ENCODE measurements at regions of chr10 and their contacts with region 1.

Region 1: DNA sequence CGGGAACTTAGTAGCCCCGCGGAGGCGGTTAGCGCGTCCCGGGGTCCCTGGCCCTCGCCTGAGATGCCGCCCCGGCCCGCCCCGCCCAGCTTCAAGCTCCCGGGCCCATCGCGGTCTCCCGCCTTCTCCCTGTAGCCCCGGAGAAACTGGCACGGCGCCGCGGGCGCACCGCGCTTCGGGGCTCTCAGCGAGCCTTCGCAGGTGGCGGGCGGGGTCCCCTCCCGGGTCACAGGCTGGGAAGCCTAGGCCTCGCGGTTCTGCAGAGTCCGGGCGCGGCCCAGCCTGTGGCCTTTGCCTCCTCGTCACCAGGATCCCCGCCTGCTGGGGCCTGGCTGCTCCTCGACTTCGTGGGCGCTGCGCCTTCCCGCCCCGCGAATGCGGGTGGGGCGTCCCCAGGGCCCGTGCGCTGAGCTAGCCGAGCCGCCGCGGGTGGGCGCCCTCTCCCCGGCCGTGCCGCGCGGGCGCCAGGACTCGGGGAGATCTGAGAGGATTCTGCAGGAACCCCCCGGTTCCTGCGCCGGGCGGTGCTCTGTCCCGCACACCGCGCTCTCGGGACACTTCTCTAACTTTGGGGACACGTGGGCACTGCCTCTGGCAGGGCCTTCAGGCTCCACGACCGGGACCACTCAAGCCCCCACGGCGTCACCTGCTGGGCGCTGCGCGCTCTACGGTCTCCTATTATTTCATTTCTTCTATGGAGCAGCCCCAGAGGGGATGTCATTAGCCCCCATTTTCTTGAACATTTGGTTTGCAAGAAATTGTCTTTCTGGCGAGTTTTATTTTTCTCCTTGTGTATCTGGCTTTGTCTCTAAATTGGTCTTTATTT is 682 bp upstream of the RGS10 start:
- DNase-seq: peak; percentile 54 to 74 (median 68)
- ATAC-seq: peak; percentile 68
- H3K4me3 ChIP-seq: peak overlapping the region; percentile 96
- H3K4me3 Mint-ChIP-seq: peak overlapping the region; percentile 83 to 97 (median 94)
- H3K27ac ChIP-seq: peak overlapping the region; percentile 89
- H3K27ac Mint-ChIP-seq: peak overlapping the region; percentile 86 to 95 (median 91)
- H3K4me1 ChIP-seq: peaks cover 15 to 19% of the 10 kb centered on the region in 2 donors
- H3K4me1 Mint-ChIP-seq: peaks cover 19 to 41% (median 28%) of the 10 kb centered on the region in 7 donors
- H3K27me3 ChIP-seq: no peaks in the 10 kb centered on the region
- H3K27me3 Mint-ChIP-seq: peaks cover 0 to 17% (median 3%) of the 10 kb centered on the region in 5 donors

Region 2: GRCh38 chr10:119080521-119081260 is 462.5 kb before region 1 on chr10 and contains the start of gene EIF3A:
- CTCF ChIA-PET with region 1: interaction called, 3 read pairs
- POLR2A ChIA-PET with region 1: no interaction called
- intact Hi-C with region 1: loop called in 1 of 2 experiments (anchors 1 kb)
- DNase-seq: peak; percentile 87 to 98 (median 93)
- ATAC-seq: peak; percentile 90
- H3K4me3 ChIP-seq: peak within 1 kb of the TSS; percentile 83
- H3K4me3 Mint-ChIP-seq: peak within 1 kb of the TSS; percentile 86 to 99 (median 98)
- H3K27ac ChIP-seq: peak within 1 kb of the TSS; percentile 91
- H3K27ac Mint-ChIP-seq: peak within 1 kb of the TSS; percentile 93 to 100 (median 98)
- H3K4me1 ChIP-seq: peaks cover 6 to 26% of the 10 kb centered on the region in 2 donors
- H3K4me1 Mint-ChIP-seq: peaks cover 28 to 55% (median 45%) of the 10 kb centered on the region in 7 donors
- H3K27me3 ChIP-seq: no peaks in the 10 kb centered on the region
- H3K27me3 Mint-ChIP-seq: peaks cover 0 to 2% (median 0%) of the 10 kb centered on the region in 5 donors
- total RNA-seq, gene EIF3A: 87.8 to 137 (median 96.0) TPM

Region 3: DNA sequence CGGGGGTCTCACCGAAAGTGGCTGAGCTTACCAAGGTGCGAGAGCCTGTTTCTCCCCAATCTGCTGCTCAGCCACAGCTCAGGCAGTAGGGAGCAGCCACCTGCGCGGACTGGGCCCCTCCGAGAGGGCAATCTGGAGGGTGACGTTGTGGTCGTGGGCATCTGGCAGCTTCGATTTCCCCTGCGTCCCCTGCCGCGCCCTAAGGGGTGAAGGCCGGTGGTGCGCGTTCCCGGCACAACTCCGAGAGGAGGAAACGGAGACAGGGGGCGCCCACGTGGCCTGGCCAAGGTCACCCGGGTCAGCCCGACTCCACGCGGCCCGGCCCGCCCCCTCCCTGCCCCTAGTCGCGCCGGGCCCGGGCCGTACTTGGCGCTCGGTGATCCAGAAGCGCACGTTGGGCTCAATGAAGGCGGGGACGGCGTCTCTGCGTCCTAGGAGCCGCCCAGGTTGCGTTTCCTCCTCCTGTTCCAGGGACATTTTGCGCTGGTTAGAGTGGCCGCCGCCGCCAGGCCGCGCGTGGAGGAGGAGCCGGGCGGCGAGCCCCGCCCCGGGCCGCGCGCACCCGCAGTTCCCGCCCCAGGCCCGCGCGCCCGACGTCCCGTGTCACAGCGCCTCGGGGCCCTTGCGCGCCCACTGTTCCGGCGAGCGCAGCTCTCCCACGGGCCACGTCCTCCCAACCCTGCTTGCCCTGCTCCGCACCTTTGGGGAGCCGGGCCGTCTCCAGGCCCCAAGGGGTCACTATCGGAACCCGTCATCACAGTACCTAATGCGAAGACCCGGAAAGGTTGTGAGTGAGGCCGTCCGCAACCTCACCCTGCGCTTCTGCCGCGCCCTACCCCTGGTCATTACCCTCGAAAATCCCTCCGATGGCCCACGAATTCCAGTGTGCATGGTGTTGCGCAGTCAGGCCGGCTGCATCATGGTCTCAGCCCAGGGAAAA is 377.8 kb before region 1 on chr10 and contains the start of gene SFXN4:
- CTCF ChIA-PET with region 1: no interaction called
- POLR2A ChIA-PET with region 1: no interaction called
- intact Hi-C with region 1: loop called (anchors 1 kb)
- DNase-seq: peak; percentile 72 to 87 (median 84)
- ATAC-seq: peak; percentile 98
- H3K4me3 ChIP-seq: peak within 1 kb of the TSS; percentile 95
- H3K4me3 Mint-ChIP-seq: peak within 1 kb of the TSS; percentile 89 to 95 (median 92)
- H3K27ac ChIP-seq: peak within 1 kb of the TSS; percentile 88
- H3K27ac Mint-ChIP-seq: peak within 1 kb of the TSS; percentile 85 to 98 (median 95)
- H3K4me1 ChIP-seq: peaks cover 12 to 15% of the 10 kb centered on the region in 2 donors
- H3K4me1 Mint-ChIP-seq: peaks cover 22 to 39% (median 32%) of the 10 kb centered on the region in 7 donors
- H3K27me3 ChIP-seq: no peaks in the 10 kb centered on the region
- H3K27me3 Mint-ChIP-seq: no peaks in the 10 kb centered on the region
- total RNA-seq, gene SFXN4: 11.8 to 28.1 (median 23.1) TPM

Region 4: GRCh38 chr10:119305860-119306513 is 237.2 kb before region 1 on chr10:
- CTCF ChIA-PET with region 1: interaction called, 3 read pairs
- POLR2A ChIA-PET with region 1: interaction called, 6 read pairs
- intact Hi-C with region 1: loop called (anchors 1 to 2 kb)
- DNase-seq: peak; percentile 38 to 93 (median 70)
- ATAC-seq: peak; percentile 85
- H3K4me3 ChIP-seq: peak overlapping the region; percentile 65
- H3K4me3 Mint-ChIP-seq: peak overlapping the region; percentile 71 to 93 (median 90)
- H3K27ac ChIP-seq: peak overlapping the region; percentile 90
- H3K27ac Mint-ChIP-seq: peak overlapping the region; percentile 94 to 99 (median 97)
- H3K4me1 ChIP-seq: peaks cover 47 to 53% of the 10 kb centered on the region in 2 donors
- H3K4me1 Mint-ChIP-seq: peaks cover 50 to 87% (median 74%) of the 10 kb centered on the region in 7 donors
- H3K27me3 ChIP-seq: no peaks in the 10 kb centered on the region
- H3K27me3 Mint-ChIP-seq: peaks cover 0 to 2% (median 0%) of the 10 kb centered on the region in 5 donors

Region 5: DNA sequence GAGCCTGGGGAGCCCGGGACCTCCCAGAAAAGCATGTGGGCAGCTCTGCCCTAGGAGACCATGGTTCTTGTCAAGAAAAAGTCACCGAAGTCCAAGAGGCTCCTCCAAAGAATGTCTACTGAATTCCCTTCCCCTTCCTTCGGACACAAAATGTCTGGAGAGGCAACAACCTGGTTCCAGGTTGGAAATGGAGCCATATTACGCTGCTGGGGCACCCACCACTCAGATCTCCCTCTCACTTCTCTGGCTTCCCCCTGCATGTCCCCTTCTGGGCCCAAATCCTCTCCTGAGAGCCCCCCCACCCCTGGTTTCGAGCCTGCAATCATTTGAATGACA is 53.2 kb before region 1 on chr10:
- CTCF ChIA-PET with region 1: interaction called, 14 read pairs
- POLR2A ChIA-PET with region 1: interaction called, 21 read pairs
- intact Hi-C with region 1: loop called in 1 of 2 experiments (anchors 1 kb)
- DNase-seq: no peak
- ATAC-seq: no peak
- H3K4me3 ChIP-seq: peak overlapping the region; percentile 55
- H3K4me3 Mint-ChIP-seq: peak overlapping the region; percentile 53 to 92 (median 84)
- H3K27ac ChIP-seq: peak overlapping the region; percentile 83
- H3K27ac Mint-ChIP-seq: peak overlapping the region; percentile 80 to 98 (median 92)
- H3K4me1 ChIP-seq: peaks cover 24 to 36% of the 10 kb centered on the region in 2 donors
- H3K4me1 Mint-ChIP-seq: peaks cover 19 to 66% (median 59%) of the 10 kb centered on the region in 7 donors
- H3K27me3 ChIP-seq: no peaks in the 10 kb centered on the region
- H3K27me3 Mint-ChIP-seq: no peaks in the 10 kb centered on the region

Region 6: DNA sequence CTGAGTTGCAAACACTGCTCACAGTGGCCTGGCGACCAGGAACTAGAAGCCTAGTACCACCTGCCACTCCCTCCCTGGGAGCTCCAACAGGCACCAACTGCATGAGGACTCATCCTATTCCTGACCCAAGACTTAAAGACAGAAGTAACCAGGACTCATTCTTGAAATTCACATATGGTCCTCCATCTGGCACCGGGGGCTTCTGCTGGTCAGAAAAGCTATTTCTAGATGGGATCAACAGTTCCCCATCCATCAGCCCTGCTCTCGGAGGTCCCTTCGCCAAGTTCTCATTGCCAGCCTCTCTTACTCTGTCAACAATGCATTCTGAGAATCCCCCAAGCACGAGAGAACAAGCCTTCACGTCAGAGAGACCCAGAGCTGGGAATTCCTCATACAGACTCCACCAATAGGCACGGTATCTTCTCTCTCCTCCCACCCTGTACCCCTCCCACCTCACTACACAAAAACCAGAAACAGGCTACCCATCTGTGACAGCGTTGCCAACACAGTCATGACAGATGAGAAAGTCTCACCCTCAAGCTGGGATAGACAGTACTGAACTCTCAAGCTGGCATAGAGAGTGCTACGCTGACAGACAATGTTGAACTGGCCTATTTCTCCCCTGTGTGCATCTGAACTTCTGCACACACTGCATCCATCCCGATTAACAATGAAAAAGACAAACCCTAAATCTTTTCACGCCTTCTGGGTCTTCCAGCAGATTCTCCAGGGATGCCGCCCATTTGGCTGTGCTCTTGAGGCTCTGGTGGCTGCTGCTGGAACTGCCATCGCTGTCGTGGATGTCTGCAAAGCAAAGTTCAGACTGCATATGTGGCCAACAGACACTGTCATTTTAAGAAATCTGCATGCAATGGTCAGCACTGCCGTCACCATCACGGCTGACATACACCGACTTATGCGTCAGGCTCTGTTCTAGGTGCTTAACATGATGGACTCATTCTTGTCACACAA is 16.3 kb before region 1 on chr10:
- CTCF ChIA-PET with region 1: interaction called, 8 read pairs
- POLR2A ChIA-PET with region 1: interaction called, 110 read pairs
- intact Hi-C with region 1: loop called in 1 of 2 experiments (anchors 1 kb)
- DNase-seq: no peak
- ATAC-seq: no peak
- H3K4me3 ChIP-seq: no peak overlapping the region
- H3K4me3 Mint-ChIP-seq: peak overlapping the region in 6 of 10 donors; percentile 18 to 61 (median 40)
- H3K27ac ChIP-seq: peak overlapping the region; percentile 39
- H3K27ac Mint-ChIP-seq: peak overlapping the region in 7 of 9 donors; percentile 73 to 89 (median 83)
- H3K4me1 ChIP-seq: peaks cover 0 to 37% of the 10 kb centered on the region in 2 donors
- H3K4me1 Mint-ChIP-seq: peaks cover 21 to 78% (median 65%) of the 10 kb centered on the region in 7 donors
- H3K27me3 ChIP-seq: no peaks in the 10 kb centered on the region
- H3K27me3 Mint-ChIP-seq: no peaks in the 10 kb centered on the region

Region 7: DNA sequence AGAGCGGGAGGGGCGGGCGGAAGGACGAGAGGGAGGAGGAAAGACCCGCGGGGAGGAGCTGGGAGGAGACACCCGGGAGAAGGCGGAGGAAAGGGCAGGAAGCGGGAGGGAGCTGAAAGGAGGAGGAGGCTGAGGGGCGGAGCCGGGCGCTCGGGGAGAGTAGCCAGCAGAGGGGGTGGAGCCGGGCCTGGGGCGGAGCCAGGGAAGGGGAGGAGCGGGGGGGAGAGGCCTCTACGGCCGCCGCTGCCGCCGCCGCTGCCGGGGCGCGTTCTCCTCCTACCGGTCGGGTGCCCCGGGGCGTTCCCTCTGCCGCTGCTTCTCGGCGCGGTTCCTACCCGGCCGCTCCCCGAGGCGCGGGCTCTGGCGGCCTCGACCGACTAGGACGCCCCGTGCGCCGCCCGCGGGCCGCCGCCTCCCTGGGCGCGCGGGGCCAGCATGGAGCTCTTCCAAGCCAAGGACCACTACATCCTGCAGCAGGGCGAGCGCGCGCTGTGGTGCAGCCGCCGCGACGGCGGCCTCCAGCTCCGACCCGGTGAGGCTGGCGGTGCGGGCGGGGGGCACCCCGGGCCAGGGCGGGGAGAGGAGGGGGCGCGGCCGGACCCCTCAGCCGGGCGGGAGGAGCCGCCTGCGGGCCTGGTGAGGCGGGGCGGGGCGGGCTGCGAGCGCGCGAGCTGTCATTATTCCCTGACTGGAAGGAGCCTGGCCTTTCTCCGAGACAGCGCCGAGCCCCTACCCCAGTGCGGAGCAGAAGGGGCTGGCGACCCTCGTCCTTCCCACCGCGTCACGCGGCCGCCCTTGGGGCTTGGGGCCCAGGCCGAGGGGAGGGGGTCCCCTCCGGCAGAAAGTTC is 182.9 kb after region 1 on chr10 and contains the start of gene INPP5F:
- CTCF ChIA-PET with region 1: no interaction called
- POLR2A ChIA-PET with region 1: interaction called, 6 read pairs
- intact Hi-C with region 1: loop called (anchors 1 to 5 kb)
- DNase-seq: peak; percentile 95 to 100 (median 96)
- ATAC-seq: peak; percentile 98
- H3K4me3 ChIP-seq: peak within 1 kb of the TSS; percentile 78
- H3K4me3 Mint-ChIP-seq: peak within 1 kb of the TSS; percentile 89 to 95 (median 94)
- H3K27ac ChIP-seq: peak within 1 kb of the TSS; percentile 76
- H3K27ac Mint-ChIP-seq: peak within 1 kb of the TSS; percentile 71 to 92 (median 87)
- H3K4me1 ChIP-seq: peaks cover 11 to 24% of the 10 kb centered on the region in 2 donors
- H3K4me1 Mint-ChIP-seq: peaks cover 25 to 53% (median 38%) of the 10 kb centered on the region in 7 donors
- H3K27me3 ChIP-seq: no peaks in the 10 kb centered on the region
- H3K27me3 Mint-ChIP-seq: no peaks in the 10 kb centered on the region
- total RNA-seq, gene INPP5F: 8.5 to 12.1 (median 10.0) TPM

Measured in naive thymus-derived CD4-positive, alpha-beta T cell (primary cell).